Prostate gland (tissue), 2 donors: ENCODE measurements at regions of chr11 and their contacts with region 1.

Region 1: DNA sequence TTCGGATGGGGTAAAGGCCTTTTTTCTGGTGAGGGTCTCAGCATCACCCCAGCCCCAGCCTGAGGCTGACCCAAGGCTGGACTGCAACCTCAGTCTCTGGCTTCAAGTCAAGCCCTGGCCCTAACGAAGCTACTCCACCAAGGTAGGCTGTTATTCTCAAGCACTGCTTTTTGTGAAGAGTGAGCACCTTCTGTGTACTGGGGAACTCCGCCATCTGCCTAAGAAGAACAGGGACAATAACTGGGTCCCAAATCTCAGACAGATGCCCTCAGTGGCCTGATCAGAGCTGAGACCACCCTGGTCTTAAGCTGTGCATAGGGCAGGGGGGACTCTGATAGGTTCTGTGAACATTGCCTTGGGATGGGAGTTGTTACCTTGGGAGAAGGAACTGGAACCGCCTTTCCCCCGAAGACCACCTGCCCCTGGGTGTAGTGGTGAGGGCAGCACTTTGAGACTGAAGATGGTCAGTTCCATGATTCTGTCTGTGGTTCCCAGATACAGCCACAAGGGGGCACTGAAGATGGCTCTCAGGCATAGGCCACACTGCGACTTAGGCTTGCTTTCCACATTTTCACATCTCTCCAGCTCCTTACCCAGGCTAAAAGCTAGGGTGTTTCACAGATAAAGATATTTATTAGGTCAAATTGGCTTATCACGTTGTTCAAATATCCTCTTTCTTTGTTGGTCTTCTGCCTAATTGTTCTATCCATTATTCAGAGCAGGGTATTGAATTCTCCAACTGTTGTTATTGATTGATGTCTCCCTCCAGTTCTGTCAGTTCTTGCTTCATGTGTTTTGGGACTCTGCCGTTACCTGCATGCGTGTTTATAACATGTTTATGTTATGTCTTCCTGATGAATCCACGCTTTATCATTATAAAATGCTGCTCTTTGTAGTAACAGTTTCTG is 11.8 kb upstream of the UVRAG start:
- DNase-seq: peak; percentile 62
- H3K4me3 ChIP-seq: no peak overlapping the region
- H3K27ac ChIP-seq: no peak overlapping the region
- H3K4me1 ChIP-seq: no peaks in the 10 kb centered on the region
- H3K27me3 ChIP-seq: no peaks in the 10 kb centered on the region
- CTCF ChIP-seq: peak; percentile 72 to 88 (median 84)
- POLR2A ChIP-seq: no peak

Region 2: GRCh38 chr11:75654314-75654713 is 148.9 kb before region 1 on chr11:
- intact Hi-C with region 1: no loop called
- DNase-seq: no peak
- H3K4me3 ChIP-seq: no peak overlapping the region
- H3K27ac ChIP-seq: no peak overlapping the region
- H3K4me1 ChIP-seq: no peaks in the 10 kb centered on the region
- H3K27me3 ChIP-seq: no peaks in the 10 kb centered on the region
- CTCF ChIP-seq: no peak
- POLR2A ChIP-seq: no peak

Region 3: DNA sequence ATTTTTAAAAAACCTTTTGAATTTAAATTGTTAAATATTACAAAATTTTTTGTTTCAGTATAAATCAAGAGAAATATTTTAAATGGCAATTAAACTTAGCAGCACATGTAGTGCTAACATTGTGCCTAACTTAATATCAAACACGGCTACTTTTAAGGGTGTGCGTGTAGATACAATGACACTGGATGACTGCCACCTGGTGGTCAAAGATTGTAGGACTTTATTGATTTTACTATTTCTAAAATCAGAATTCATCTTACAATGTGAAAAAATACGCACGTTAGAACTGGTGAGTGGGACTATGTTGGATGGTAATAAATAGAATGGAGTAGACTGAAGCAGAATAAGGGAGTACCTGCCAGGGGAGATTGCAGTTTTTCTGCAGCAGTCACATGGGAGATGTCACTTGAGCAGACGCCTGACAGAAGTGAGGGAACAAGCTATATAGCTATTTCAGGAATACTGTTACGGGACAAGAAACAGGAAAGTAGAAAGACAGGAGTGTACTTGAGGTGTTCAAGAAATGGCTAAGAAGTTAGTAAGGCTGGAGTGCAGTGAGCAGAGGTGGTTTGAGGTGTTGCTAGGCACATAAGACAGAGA is 64.7 kb after region 1 on chr11:
- intact Hi-C with region 1: loop called (anchors 2 kb)
- DNase-seq: peak; percentile 53
- H3K4me3 ChIP-seq: no peak overlapping the region
- H3K27ac ChIP-seq: no peak overlapping the region
- H3K4me1 ChIP-seq: peaks cover 8% of the 10 kb centered on the region
- H3K27me3 ChIP-seq: no peaks in the 10 kb centered on the region
- CTCF ChIP-seq: peak; percentile 69 to 95 (median 86)
- POLR2A ChIP-seq: no peak

Region 4: GRCh38 chr11:76152086-76152681 is 349.0 kb after region 1 on chr11:
- intact Hi-C with region 1: loop called (anchors 5 kb)
- DNase-seq: peak; percentile 79
- H3K4me3 ChIP-seq: peak overlapping the region in 1 of 2 donors; percentile 12
- H3K27ac ChIP-seq: no peak overlapping the region
- H3K4me1 ChIP-seq: peaks cover 2% of the 10 kb centered on the region
- H3K27me3 ChIP-seq: no peaks in the 10 kb centered on the region
- CTCF ChIP-seq: peak; percentile 78 to 95 (median 90)
- POLR2A ChIP-seq: no peak

Region 5: DNA sequence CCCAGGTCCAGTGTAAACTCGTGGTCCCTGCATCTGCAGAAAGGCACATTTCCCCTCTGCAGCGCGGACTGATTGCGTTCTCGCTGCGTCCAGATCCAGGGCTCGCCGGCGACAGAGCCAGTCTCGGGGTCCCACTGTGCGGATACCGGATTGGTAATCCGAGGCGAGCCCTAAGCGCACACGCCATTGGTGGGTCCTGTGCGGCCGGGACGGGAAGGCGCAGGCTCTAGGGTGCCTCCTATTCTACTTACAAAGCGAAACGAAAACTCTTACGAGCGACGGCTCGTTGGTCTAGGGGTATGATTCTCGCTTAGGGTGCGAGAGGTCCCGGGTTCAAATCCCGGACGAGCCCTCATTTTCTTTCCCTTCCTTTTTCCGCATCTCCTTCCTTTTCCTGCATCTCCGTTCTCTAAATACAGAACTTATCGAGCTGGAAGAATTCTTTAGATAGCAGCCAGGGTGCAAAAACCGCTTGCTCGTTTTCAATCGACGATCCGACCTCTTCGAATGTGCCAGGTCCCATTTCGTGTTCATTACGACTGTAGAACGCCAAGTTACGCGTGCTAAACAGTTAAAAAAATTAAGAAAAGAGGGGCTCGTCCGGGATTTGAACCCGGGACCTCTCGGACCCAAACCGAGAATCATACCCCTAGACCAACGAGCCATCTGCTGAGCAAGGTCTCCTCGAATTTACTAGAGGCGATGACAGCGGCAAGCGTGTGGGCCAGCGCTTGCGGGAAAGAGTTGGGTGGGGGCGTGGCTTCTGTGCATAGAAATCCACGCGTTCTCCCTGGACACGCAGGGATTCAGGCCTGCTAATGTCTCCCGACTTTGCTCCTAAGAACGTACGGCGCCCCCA is 432.3 kb after region 1 on chr11:
- intact Hi-C with region 1: loop called (anchors 10 kb)
- DNase-seq: peak; percentile 88
- H3K4me3 ChIP-seq: peak overlapping the region; percentile 47 to 77
- H3K27ac ChIP-seq: peak overlapping the region; percentile 80 to 81
- H3K4me1 ChIP-seq: no peaks in the 10 kb centered on the region
- H3K27me3 ChIP-seq: no peaks in the 10 kb centered on the region
- CTCF ChIP-seq: peak in 1 of 4 experiments; percentile 4
- POLR2A ChIP-seq: peak; percentile 21